Activated naive CD4-positive, alpha-beta T cell treated with anti-CD3 and anti-CD28 coated beads, Interleukin-2, amount 10 ng/mL, durations not matched to agents 7 days and 5 days (primary cell): ENCODE measurements at regions of chr17 and their contacts with region 1.

Region 1: DNA sequence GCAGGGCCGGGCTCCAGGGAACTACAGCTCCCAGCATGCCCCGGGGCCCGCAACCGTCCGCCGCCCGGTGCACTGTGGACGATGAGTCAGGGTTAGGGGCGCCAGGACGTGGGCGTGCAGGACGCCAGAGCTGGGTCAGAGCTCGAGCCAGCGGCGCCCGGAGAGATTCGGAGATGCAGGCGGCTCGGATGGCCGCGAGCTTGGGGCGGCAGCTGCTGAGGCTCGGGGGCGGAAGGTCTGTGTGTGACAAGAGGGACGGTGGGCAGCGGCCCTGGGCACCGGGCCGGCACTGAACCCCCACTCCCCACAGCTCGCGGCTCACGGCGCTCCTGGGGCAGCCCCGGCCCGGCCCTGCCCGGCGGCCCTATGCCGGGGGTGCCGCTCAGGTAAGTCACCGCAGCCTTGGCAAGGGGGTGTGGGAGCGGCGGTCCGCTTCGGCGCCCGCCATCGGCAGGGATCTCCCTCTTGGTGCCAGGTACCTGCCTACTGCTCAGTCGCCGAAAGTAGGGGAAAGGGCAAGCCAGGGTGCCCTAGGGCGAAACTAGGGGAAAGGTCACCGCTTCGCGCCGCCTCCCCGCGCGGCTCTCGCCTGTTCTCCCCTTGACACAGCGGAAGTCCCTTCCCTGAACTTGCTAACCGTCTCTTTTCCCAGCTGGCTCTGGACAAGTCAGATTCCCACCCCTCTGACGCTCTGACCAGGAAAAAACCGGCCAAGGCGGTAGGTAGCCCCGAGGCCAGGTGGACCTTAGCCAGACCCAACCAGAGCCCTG is at the starts of genes ACADVL and DLG4:
- DNase-seq: peak; percentile 86
- H3K4me3 Mint-ChIP-seq: peak within 1 kb of the TSS; percentile 94
- H3K27ac Mint-ChIP-seq: peak within 1 kb of the TSS; percentile 90
- H3K4me1 Mint-ChIP-seq: peaks cover 62% of the 10 kb centered on the region
- H3K27me3 Mint-ChIP-seq: peaks cover 13% of the 10 kb centered on the region

Region 2: DNA sequence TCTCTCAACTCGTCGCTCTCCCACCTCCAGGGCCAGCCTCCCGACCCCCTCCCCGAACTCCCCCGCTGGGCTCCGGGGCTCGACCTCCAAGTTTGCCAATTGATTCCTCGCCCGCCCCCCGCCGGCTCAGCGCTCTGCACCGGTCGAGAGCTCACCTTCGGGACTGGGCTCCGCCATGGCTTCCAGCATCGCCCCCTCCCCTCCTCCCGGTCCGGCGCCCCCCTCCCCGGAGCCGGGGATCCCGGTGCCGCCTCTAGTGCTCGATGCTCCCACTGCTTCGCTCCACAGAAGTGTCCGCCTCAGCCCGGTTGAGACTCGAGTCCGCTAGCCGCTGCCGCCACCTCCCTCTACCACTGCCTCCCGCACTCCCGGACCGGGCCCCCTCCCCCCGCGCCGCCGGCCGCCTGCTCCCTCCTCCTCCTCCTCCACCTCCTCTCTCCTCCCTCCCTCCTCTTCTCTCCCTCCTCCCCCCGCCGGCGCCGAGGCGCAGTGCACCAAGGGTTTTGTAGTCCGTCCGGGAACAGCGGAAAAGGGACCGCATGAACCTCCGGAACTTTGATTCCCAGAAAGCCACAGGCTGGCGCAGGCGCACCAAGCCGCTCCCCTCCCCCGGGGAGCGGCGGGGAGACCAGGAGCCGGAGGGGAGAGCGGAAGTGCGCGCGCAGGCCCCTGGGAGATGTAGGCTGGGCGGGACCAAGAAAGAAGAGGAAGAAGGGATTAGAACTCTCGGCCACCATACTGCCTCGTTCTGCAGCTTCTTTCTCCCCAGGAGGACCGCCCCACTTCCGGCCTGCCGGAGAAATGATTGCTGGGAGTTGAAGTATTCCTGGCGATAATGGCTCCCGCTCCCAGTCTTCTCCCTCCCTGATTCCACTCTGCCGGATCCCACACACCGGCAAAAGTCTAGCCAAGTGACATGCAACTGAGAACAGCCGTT is 19.4 kb after region 1 on chr17 and contains the start of gene PHF23:
- CTCF ChIA-PET with region 1: interaction called, 17 read pairs
- DNase-seq: peak; percentile 98
- H3K4me3 Mint-ChIP-seq: peak within 1 kb of the TSS; percentile 94
- H3K27ac Mint-ChIP-seq: peak within 1 kb of the TSS; percentile 98
- H3K4me1 Mint-ChIP-seq: peaks cover 66% of the 10 kb centered on the region
- H3K27me3 Mint-ChIP-seq: no peaks in the 10 kb centered on the region

Region 3: GRCh38 chr17:7530023-7530900 is 310.3 kb after region 1 on chr17:
- CTCF ChIA-PET with region 1: no interaction called
- DNase-seq: no peak
- H3K4me3 Mint-ChIP-seq: no peak overlapping the region
- H3K27ac Mint-ChIP-seq: no peak overlapping the region
- H3K4me1 Mint-ChIP-seq: no peaks in the 10 kb centered on the region
- H3K27me3 Mint-ChIP-seq: no peaks in the 10 kb centered on the region